Activated CD4-positive, alpha-beta T cell treated with anti-CD3 and anti-CD28 coated beads for 36 hours (primary cell): ENCODE measurements at regions of chr14 and their contacts with region 1.

Region 1: DNA sequence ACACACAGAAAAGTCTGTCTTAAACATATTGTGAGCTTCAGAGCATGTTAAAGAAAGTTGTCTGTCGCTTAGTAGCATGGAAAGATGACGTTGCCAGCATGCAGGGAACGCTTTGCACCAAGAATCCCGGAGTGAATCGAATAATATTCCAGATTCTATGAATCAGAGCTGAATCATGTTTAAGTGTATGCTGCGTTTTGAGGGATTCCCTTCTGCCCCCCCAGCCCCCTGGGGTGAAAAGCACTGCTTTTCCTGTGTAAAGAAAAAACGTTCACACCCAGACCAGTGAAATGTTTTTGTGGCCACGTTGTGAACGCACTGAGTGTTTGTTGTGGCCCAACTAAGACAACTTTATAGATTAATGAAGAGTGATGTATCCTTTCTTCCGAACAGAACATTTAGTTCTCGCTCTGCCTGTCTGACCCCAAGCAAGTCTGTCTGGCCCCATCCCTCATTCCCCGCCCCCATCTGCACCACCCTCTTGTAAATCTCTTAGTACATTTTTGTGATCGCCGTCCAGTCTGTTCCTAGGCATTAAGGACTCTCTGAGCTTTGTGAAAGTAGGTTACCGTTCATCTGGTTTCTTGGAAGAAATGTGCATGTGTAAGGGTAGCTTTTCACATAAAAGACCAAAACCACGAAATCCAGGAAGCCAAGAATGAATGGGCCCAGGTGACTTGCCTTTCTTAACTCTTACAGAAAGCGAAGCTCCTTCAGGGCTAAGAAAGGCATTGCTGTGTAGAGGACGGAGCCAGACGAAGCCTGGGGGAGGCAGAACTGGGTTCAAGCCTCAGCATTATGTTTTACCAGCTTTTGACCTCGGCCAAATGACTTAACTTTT is 103.0 kb downstream of the SAMD4A start:
- DNase-seq: peak; percentile 38
- ATAC-seq: peak; percentile 83
- H3K4me3 Mint-ChIP-seq: no peak overlapping the region
- H3K27ac Mint-ChIP-seq: peak overlapping the region; percentile 39
- H3K4me1 Mint-ChIP-seq: peaks cover 29% of the 10 kb centered on the region
- H3K27me3 Mint-ChIP-seq: peaks cover 22% of the 10 kb centered on the region

Region 2: DNA sequence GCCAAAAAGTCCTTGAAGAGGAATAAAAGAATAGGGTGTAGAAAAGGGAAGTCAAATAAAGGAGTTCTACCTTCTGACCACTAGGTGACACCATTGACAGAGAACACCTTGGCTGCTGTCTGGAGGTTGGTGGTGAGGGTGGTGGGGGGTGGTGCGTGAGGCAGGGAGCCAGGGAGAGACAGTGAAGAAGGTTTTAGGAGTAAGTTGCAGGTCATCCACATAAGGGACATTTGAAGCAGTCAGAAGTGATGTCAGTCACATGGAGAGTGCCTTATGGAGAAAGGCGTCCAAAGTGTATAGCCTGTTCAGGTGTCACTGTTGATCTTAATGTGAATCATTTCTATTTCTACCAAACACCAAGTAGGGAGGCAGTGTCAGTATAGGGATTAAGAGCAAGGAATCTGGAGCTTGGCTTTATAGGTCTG is 1237.6 kb before region 1 on chr14:
- CTCF ChIA-PET with region 1: no interaction called
- POLR2A ChIA-PET with region 1: no interaction called
- intact Hi-C with region 1: loop called in 1 of 2 experiments (anchors 10 kb)
- DNase-seq: peak; percentile 12
- ATAC-seq: peak; percentile 44
- H3K4me3 Mint-ChIP-seq: no peak overlapping the region
- H3K27ac Mint-ChIP-seq: no peak overlapping the region
- H3K4me1 Mint-ChIP-seq: no peaks in the 10 kb centered on the region
- H3K27me3 Mint-ChIP-seq: peaks cover 3% of the 10 kb centered on the region

Region 3: DNA sequence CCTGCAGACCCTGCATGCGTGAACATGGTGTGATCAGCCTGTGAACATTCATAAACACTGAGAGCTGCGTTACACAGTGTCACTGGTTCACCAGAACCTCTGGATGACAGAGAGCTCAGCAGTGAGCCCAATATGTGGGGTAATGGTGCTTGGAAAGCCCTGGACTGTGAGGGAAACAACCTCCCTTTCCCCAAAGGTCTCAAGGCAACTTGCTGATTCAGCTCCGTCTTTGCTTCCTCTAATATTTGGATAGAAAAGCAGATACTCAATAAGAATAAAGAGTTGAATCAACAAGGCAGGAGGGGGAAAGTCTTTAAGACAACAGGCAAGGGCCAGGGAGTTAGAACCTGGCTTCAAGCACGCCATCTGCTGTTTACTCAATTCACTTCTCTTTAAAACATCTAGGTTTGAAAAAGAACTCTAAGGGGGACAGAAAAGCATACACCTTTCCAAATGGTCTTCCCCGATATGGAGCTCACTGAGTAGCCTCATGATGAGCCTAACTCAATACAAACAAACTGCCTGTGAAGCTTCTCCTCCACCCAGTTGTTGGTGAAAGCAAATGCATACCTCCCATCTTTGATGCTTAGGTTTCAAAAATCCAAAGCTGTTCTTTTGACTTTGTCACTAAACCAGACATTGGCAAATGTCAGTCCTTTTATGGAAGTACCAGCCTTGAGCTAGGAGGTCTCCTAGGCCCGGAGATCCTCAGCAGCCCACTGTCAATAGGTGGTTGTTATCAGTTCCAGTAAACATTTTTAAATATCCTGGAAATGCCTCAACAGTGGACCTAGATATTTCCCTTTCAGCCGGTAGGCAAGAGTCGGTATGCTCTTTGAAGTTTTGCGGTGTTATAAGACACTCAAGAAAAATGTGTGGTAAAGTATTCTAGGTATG is 26.9 kb before region 1 on chr14:
- CTCF ChIA-PET with region 1: no interaction called
- POLR2A ChIA-PET with region 1: no interaction called
- intact Hi-C with region 1: loop called in 1 of 2 experiments (anchors 2 kb)
- DNase-seq: peak; percentile 22
- ATAC-seq: no peak
- H3K4me3 Mint-ChIP-seq: no peak overlapping the region
- H3K27ac Mint-ChIP-seq: no peak overlapping the region
- H3K4me1 Mint-ChIP-seq: peaks cover 12% of the 10 kb centered on the region
- H3K27me3 Mint-ChIP-seq: no peaks in the 10 kb centered on the region